Mucosa of descending colon (tissue), 3 donors: ENCODE measurements at regions of chr18 and their contacts with region 1.

Region 1: DNA sequence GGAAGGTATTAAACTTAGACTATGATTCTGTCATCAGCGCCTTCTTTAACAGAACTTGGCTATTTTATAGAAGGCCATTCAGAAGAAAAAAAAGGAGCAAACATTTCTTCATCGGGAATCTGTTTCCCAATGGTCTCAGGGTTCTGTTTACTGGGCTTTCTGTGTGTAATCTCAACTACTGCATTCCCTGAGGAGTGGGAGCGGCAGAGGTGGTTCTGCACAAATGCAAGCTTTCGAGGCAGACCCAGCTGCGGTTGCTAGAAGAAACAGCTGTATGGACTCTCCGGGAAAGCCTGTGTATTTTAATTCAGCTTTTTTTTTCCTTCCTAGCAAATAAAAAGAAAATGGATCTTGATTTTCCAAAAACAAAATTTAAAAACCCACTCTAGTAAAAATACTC is 250.7 kb downstream of the NAPG start:
- DNase-seq: no peak
- ATAC-seq: no peak
- H3K4me3 ChIP-seq: no peak overlapping the region
- H3K4me1 ChIP-seq: no peaks in the 10 kb centered on the region
- CTCF ChIP-seq: no peak

Region 2: DNA sequence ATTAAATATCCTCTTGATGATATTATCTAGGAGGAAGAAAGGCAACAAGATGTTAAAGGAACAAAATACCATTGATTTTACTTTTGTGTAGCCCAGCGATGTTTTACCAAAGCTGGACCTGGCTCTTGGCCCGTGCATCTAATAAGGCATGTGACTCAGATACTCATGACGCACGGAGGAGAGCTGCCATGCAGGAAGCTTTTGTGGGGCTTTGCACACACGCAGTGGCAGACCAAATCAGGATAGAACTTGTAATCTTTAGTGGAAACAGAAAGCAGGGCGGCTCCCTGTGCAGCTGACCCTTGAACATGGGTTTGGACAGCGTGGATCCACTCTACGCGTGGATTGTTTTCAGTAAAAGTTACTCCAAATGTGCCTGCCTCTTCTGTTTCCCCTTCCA is 60.7 kb before region 1 on chr18:
- intact Hi-C with region 1: loop called in 1 of 2 experiments (anchors 5 kb)
- DNase-seq: peak in 1 of 3 donors; percentile 4
- ATAC-seq: no peak
- H3K4me3 ChIP-seq: no peak overlapping the region
- H3K4me1 ChIP-seq: no peaks in the 10 kb centered on the region
- CTCF ChIP-seq: no peak